ENCODE measurements at regions of chr5 and their contacts with region 1.

Region 1: GRCh38 chr5:139517683-139518564 is 35.4 kb upstream of the STING1 start:
- DNase-seq: peak; percentile 52
- ATAC-seq: peak; percentile 93
- H3K4me3 ChIP-seq: peak overlapping the region; percentile 54 to 58
- H3K27ac ChIP-seq: peak overlapping the region; percentile 89
- H3K4me1 ChIP-seq: peaks cover 10% of the 10 kb centered on the region
- H3K27me3 ChIP-seq: no peaks in the 10 kb centered on the region
- CTCF ChIP-seq: peak; percentile 99

Region 2: GRCh38 chr5:138498376-138498775 is 1019.5 kb before region 1 on chr5:
- CTCF ChIA-PET with region 1: no interaction called
- POLR2A ChIA-PET with region 1: interaction called, 10 read pairs
- in situ Hi-C with region 1: no loop called
- intact Hi-C with region 1: no loop called
- DNase-seq: no peak
- ATAC-seq: no peak
- H3K4me3 ChIP-seq: no peak overlapping the region
- H3K27ac ChIP-seq: no peak overlapping the region
- H3K4me1 ChIP-seq: no peaks in the 10 kb centered on the region
- H3K27me3 ChIP-seq: no peaks in the 10 kb centered on the region
- CTCF ChIP-seq: no peak

Region 3: GRCh38 chr5:139403787-139404483 is 114.0 kb before region 1 on chr5 and contains the start of gene SPATA24:
- CTCF ChIA-PET with region 1: interaction called, 9 read pairs
- POLR2A ChIA-PET with region 1: no interaction called
- in situ Hi-C with region 1: loop called (anchors 25 kb)
- intact Hi-C with region 1: no loop called
- DNase-seq: peak; percentile 83
- ATAC-seq: peak; percentile 97
- H3K4me3 ChIP-seq: peak within 1 kb of the TSS; percentile 53 to 71
- H3K27ac ChIP-seq: peak within 1 kb of the TSS; percentile 91
- H3K4me1 ChIP-seq: peaks cover 14% of the 10 kb centered on the region
- H3K27me3 ChIP-seq: no peaks in the 10 kb centered on the region
- CTCF ChIP-seq: no peak
- total RNA-seq, gene SPATA24: 5.5 TPM

Region 4: DNA sequence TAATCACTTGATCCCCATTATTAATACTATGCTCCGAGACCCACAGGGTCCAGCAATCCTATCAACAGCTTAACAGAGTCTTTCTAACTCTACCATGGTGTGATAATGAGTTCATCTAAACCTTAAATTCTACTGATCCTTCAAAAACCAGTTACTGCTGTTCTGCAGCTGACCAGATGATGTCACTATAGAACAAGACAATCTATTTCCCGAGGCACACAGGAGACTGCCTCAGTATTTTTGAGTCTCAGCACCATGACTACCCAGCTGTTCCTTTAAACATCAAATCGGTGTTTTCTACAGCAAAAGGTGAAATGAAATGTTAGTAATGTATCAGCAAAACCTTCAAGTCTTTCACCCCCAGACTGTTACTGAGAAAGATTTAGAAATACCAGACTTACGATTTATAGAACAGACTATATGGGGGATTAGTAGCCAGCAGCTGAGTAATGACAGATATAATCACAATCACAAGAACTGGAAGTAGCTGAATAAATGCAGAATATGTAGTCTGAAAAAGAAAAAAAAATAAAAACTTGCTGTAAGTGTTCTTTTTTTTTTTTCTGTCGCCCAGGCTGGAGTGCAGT is 95.5 kb before region 1 on chr5:
- CTCF ChIA-PET with region 1: interaction called, 18 read pairs
- POLR2A ChIA-PET with region 1: interaction called, 6 read pairs
- in situ Hi-C with region 1: loop called (anchors 25 kb)
- intact Hi-C with region 1: loop called (anchors 1 kb)
- DNase-seq: peak; percentile 63
- ATAC-seq: peak; percentile 85
- H3K4me3 ChIP-seq: no peak overlapping the region
- H3K27ac ChIP-seq: no peak overlapping the region
- H3K4me1 ChIP-seq: no peaks in the 10 kb centered on the region
- H3K27me3 ChIP-seq: no peaks in the 10 kb centered on the region
- CTCF ChIP-seq: peak; percentile 87